ENCODE measurements at regions of chr15 and their contacts with region 1.

Region 1: DNA sequence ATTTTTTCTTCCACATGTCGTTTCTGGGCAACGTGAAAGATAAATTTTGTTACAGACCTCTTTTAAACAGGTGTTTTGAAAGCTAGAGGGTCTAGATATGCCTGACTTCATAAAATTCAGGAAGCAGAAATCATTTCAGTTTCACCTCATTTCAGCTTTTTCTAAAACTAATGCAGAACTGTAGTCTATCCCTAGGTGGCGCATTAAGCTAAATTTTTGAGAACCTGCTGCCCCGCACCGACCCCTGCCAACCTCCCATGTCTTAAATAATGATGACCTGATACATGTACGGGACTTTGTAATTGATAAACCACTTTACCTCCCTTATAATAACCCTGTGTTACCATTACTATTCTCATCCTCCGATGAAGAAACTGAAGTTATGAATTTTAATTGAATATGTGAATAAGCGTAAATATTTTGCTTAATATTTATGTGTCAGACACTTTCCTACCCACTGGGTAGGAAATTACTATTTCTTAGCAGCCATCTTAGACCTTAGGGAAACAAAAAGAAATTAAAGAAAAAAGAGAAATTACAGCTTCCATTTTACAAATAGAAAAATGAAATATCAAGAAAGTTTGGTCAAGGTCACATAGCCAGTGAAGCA is 78.7 kb upstream of the GCNT3 start:
- DNase-seq: peak in 1 of 2 donors; percentile 12
- ATAC-seq: no peak
- H3K4me3 ChIP-seq: no peak overlapping the region
- H3K27ac ChIP-seq: no peak overlapping the region
- H3K4me1 ChIP-seq: peaks cover 0 to 7% (median 0%) of the 10 kb centered on the region in 9 donors
- H3K27me3 ChIP-seq: peaks cover 0 to 14% (median 7%) of the 10 kb centered on the region in 7 donors
- CTCF ChIP-seq: peak; percentile 36 to 75 (median 65)

Region 2: DNA sequence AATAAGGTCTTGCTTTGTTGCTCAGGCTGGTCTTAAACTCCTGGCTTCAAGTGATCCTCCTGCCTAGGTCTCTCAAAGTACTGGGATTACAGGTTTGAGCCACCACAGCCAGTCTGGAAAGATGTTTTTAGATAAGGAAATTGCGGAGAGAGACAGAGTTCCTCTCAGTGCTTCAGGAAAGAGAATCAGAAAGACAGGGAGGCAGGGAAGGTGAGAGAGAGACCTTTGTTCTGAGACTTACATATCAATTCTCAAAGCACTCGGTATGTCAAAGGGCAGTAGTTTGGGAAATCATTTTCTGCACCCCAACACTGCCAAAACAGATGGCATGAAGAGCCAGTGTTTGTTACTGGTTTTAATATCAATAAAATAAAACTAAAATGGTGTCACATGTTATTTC is 65.6 kb after region 1 on chr15:
- intact Hi-C with region 1: no loop called
- DNase-seq: no peak
- ATAC-seq: no peak
- H3K4me3 ChIP-seq: no peak overlapping the region
- H3K27ac ChIP-seq: no peak overlapping the region
- H3K4me1 ChIP-seq: peaks cover 0 to 9% (median 0%) of the 10 kb centered on the region in 9 donors
- H3K27me3 ChIP-seq: no peaks in the 10 kb centered on the region
- CTCF ChIP-seq: no peak

Region 3: DNA sequence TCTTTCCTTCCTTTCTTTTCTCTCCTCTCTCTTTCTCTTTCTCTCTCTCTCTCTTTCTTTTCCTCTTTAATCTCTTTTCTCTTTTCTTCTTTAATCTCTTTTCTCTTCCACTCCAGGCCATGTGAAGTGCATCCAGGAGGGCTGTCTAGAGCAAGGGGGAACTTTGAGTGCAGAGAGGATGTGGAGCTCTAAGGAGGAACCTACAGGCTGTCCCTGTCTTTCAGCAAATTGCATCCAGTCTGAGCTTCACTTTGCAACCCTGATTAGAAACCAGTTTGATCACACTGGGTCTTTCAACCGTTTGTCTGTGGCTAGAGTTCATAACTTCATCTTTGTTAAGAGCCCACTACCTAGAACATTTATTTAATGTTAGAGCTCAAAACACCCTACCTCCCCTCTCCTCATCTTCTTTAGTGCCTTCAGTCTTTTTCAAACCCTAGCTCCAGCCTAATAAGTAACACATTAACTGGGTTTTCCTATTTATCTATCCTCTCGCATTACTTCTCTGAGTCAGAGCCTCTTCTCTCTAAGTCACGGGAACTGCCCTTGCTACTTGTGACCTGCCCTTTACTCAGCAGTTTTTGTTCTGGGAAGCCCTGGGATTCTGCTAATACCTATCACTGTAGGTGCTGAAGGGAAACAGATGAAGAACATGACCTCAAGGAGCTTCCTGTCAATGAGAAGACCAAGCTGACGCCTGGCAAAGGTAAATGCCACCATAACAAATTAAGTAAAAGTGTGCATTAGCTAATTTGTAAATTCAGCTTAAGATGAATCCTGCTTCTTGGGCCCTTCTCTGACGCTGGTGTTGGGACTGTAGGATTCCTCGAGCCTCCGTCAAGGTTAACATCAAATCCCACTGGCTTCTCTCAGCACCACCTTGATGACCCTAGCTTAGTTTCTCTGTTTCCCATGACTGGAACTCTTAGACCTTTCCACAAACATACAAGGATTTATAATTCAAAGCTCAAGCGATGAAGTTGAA is 78.7 kb after region 1 on chr15 and contains the start of gene GCNT3:
- intact Hi-C with region 1: loop called in 1 of 10 experiments (anchors 10 kb)
- DNase-seq: no peak
- ATAC-seq: no peak
- H3K4me3 ChIP-seq: no peak within 1 kb of the TSS
- H3K27ac ChIP-seq: no peak within 1 kb of the TSS
- H3K4me1 ChIP-seq: no peaks in the 10 kb centered on the region
- H3K27me3 ChIP-seq: peaks cover 0 to 16% (median 6%) of the 10 kb centered on the region in 7 donors
- CTCF ChIP-seq: no peak
- total RNA-seq, gene GCNT3: 0.12 to 0.55 (median 0.33) TPM in 4 of 10 donors, not detected in the others

Region 4: GRCh38 chr15:59622289-59622688 is 89.4 kb after region 1 on chr15:
- intact Hi-C with region 1: loop called in 3 of 10 experiments (anchors 10 kb)
- DNase-seq: no peak
- ATAC-seq: no peak
- H3K4me3 ChIP-seq: no peak overlapping the region
- H3K27ac ChIP-seq: no peak overlapping the region
- H3K4me1 ChIP-seq: no peaks in the 10 kb centered on the region
- H3K27me3 ChIP-seq: peaks cover 0 to 40% (median 14%) of the 10 kb centered on the region in 7 donors
- CTCF ChIP-seq: peak in 5 of 9 donors; percentile 9 to 42 (median 17)

Region 5: GRCh38 chr15:59632714-59633113 is 99.8 kb after region 1 on chr15:
- intact Hi-C with region 1: loop called in 3 of 10 experiments (anchors 10 kb)
- DNase-seq: no peak
- ATAC-seq: no peak
- H3K4me3 ChIP-seq: no peak overlapping the region
- H3K27ac ChIP-seq: no peak overlapping the region
- H3K4me1 ChIP-seq: no peaks in the 10 kb centered on the region
- H3K27me3 ChIP-seq: no peaks in the 10 kb centered on the region
- CTCF ChIP-seq: peak in 2 of 9 donors; percentile 18 to 26

Region 6: GRCh38 chr15:59647085-59647484 is 114.2 kb after region 1 on chr15:
- intact Hi-C with region 1: no loop called
- DNase-seq: no peak
- ATAC-seq: no peak
- H3K4me3 ChIP-seq: no peak overlapping the region
- H3K27ac ChIP-seq: no peak overlapping the region
- H3K4me1 ChIP-seq: peaks cover 0 to 14% (median 7%) of the 10 kb centered on the region in 9 donors
- H3K27me3 ChIP-seq: no peaks in the 10 kb centered on the region
- CTCF ChIP-seq: no peak

Region 7: GRCh38 chr15:59966262-59966661 is 433.4 kb after region 1 on chr15:
- intact Hi-C with region 1: no loop called
- DNase-seq: no peak
- ATAC-seq: no peak
- H3K4me3 ChIP-seq: no peak overlapping the region
- H3K27ac ChIP-seq: no peak overlapping the region
- H3K4me1 ChIP-seq: no peaks in the 10 kb centered on the region
- H3K27me3 ChIP-seq: peaks cover 0 to 8% (median 5%) of the 10 kb centered on the region in 7 donors
- CTCF ChIP-seq: no peak

Measured in heart right ventricle (tissue), 16 donors.